Heart right ventricle (tissue), 16 donors: ENCODE measurements at regions of chr11 and their contacts with region 1.

Region 1: DNA sequence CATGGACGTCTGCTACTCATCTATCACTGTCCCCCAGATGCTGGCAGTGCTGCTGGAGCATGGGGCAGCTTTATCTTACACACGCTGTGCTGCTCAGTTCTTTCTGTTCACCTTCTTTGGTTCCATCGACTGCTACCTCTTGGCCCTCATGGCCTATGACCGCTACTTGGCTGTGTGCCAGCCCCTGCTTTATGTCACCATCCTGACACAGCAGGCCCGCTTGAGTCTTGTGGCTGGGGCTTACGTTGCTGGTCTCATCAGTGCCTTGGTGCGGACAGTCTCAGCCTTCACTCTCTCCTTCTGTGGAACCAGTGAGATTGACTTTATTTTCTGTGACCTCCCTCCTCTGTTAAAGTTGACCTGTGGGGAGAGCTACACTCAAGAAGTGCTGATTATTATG is 9.2 kb upstream of the OR9Q2 start:
- DNase-seq: peak in 1 of 2 donors; percentile 15
- ATAC-seq: no peak
- H3K4me3 ChIP-seq: no peak overlapping the region
- H3K27ac ChIP-seq: no peak overlapping the region
- H3K4me1 ChIP-seq: no peaks in the 10 kb centered on the region
- H3K27me3 ChIP-seq: no peaks in the 10 kb centered on the region
- CTCF ChIP-seq: no peak

Region 2: GRCh38 chr11:58004664-58005063 is 175.0 kb before region 1 on chr11:
- intact Hi-C with region 1: no loop called
- DNase-seq: peak in 1 of 2 donors; percentile 39
- ATAC-seq: peak; percentile 81 to 94 (median 90)
- H3K4me3 ChIP-seq: no peak overlapping the region
- H3K27ac ChIP-seq: peak overlapping the region in 9 of 10 donors; percentile 7 to 89 (median 69)
- H3K4me1 ChIP-seq: peaks cover 0 to 36% (median 0%) of the 10 kb centered on the region in 9 donors
- H3K27me3 ChIP-seq: no peaks in the 10 kb centered on the region
- CTCF ChIP-seq: no peak

Region 3: DNA sequence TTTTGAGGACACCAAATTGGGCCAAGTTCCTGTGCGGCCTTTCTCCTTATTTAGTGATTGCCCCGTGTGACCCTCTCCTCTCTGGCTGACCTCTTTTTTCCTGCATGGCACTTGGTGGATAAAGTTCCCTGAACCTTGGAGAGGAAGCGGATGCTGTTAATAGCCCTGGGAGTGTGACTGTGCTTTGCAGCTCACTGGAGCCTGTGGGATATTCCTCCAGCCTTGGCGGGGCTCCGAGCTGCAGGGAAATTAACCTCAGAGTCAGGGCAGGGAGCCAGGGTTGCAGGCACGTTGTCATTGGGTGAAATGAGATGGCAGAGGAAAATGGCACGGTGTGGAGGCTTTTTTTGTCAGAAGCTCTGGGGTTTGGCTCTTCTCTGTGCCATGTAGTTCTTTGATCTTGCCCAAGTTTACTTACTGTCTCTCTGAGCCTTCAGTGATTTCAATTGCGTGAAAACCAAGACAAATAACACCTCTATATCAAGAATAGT is 155.0 kb before region 1 on chr11:
- intact Hi-C with region 1: loop called in 1 of 10 experiments (anchors 10 kb)
- DNase-seq: peak; percentile 85 to 89
- ATAC-seq: peak; percentile 92 to 98 (median 95)
- H3K4me3 ChIP-seq: no peak overlapping the region
- H3K27ac ChIP-seq: peak overlapping the region in 9 of 10 donors; percentile 21 to 93 (median 81)
- H3K4me1 ChIP-seq: peaks cover 0 to 64% (median 36%) of the 10 kb centered on the region in 9 donors
- H3K27me3 ChIP-seq: no peaks in the 10 kb centered on the region
- CTCF ChIP-seq: no peak

Region 4: DNA sequence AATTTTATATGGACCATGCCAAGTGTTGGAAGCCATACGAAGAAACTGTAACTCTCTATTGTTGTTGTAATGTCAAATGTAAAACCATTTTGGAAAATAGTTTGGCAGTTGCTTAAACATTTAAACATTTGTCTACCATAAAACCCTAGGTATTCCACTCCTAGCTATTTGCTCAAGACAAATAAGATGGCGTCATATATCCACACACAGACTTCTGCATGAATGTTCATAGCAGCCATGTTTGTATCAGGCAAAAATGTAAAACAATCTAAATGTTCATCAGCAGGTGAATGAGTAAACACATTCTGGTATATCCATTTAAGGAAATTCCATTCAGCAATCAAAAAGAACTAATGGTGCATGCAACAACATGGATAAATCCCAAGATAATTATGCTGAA is 82.2 kb before region 1 on chr11:
- intact Hi-C with region 1: loop called in 1 of 10 experiments (anchors 10 kb)
- DNase-seq: no peak
- ATAC-seq: no peak
- H3K4me3 ChIP-seq: no peak overlapping the region
- H3K27ac ChIP-seq: no peak overlapping the region
- H3K4me1 ChIP-seq: no peaks in the 10 kb centered on the region
- H3K27me3 ChIP-seq: no peaks in the 10 kb centered on the region
- CTCF ChIP-seq: no peak

Region 5: GRCh38 chr11:58112391-58112790 is 67.3 kb before region 1 on chr11:
- intact Hi-C with region 1: loop called in 1 of 10 experiments (anchors 10 kb)
- DNase-seq: no peak
- ATAC-seq: no peak
- H3K4me3 ChIP-seq: no peak overlapping the region
- H3K27ac ChIP-seq: no peak overlapping the region
- H3K4me1 ChIP-seq: no peaks in the 10 kb centered on the region
- H3K27me3 ChIP-seq: peaks cover 0 to 4% (median 0%) of the 10 kb centered on the region in 7 donors
- CTCF ChIP-seq: no peak

Region 6: GRCh38 chr11:58222721-58223120 is 43.1 kb after region 1 on chr11:
- intact Hi-C with region 1: loop called in 1 of 10 experiments (anchors 10 kb)
- DNase-seq: no peak
- ATAC-seq: no peak
- H3K4me3 ChIP-seq: no peak overlapping the region
- H3K27ac ChIP-seq: no peak overlapping the region
- H3K4me1 ChIP-seq: no peaks in the 10 kb centered on the region
- H3K27me3 ChIP-seq: no peaks in the 10 kb centered on the region
- CTCF ChIP-seq: no peak

Region 7: GRCh38 chr11:58286249-58286648 is 106.6 kb after region 1 on chr11:
- intact Hi-C with region 1: loop called in 1 of 10 experiments (anchors 10 kb)
- DNase-seq: no peak
- ATAC-seq: peak in 6 of 8 donors; percentile 57 to 78 (median 70)
- H3K4me3 ChIP-seq: no peak overlapping the region
- H3K27ac ChIP-seq: no peak overlapping the region
- H3K4me1 ChIP-seq: peaks cover 0 to 8% (median 0%) of the 10 kb centered on the region in 9 donors
- H3K27me3 ChIP-seq: no peaks in the 10 kb centered on the region
- CTCF ChIP-seq: peak; percentile 24 to 69 (median 59)